ENCODE measurements at regions of chr22 and their contacts with region 1.

Region 1: GRCh38 chr22:49936018-49936952 is 17.9 kb downstream of the CRELD2 start:
- DNase-seq: peak; percentile 81 to 93 (median 88)
- ATAC-seq: peak; percentile 79 to 83
- H3K4me3 Mint-ChIP-seq: peak overlapping the region; percentile 55 to 87 (median 72)
- H3K27ac Mint-ChIP-seq: peak overlapping the region; percentile 72 to 94 (median 86)
- H3K4me1 Mint-ChIP-seq: peaks cover 0 to 27% (median 22%) of the 10 kb centered on the region in 4 donors
- H3K27me3 Mint-ChIP-seq: no peaks in the 10 kb centered on the region

Region 2: DNA sequence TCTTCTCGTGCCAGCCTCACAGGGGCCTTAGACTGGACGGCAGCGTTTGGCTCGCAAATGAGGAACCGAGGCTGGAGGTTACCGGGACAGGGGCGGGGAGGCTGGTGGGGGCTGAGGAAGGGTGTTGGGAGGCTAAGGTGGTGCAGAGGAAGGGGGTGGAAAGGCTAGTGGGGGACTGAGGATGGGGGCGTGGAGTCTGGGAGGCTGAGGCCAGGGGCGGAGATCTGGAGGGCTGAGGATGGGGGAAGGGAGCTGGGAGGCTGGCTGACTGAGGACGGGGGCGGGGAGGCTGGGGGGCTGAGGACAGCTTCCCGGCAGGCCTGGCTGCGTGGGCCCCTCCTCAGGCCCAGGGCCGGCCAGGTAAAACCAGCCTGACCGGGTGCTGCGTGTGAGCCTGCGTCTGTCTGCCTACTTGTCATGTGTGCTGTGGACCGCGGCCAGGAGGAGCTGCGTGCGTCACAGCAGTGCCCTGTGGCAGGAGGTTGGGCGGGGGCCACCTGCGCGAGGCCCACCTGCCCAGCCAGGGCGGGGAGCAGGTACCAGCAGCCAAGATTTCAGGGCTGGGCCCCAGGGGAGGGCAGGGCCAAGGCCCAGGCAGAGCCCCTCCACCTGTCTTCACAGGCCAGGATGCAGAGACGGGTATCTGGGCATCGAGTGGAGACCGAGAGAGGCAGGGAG is 14.9 kb after region 1 on chr22:
- POLR2A ChIA-PET with region 1: interaction called, 13 read pairs
- DNase-seq: no peak
- ATAC-seq: no peak
- H3K4me3 Mint-ChIP-seq: no peak overlapping the region
- H3K27ac Mint-ChIP-seq: no peak overlapping the region
- H3K4me1 Mint-ChIP-seq: peaks cover 0 to 8% (median 6%) of the 10 kb centered on the region in 4 donors
- H3K27me3 Mint-ChIP-seq: no peaks in the 10 kb centered on the region

Region 3: DNA sequence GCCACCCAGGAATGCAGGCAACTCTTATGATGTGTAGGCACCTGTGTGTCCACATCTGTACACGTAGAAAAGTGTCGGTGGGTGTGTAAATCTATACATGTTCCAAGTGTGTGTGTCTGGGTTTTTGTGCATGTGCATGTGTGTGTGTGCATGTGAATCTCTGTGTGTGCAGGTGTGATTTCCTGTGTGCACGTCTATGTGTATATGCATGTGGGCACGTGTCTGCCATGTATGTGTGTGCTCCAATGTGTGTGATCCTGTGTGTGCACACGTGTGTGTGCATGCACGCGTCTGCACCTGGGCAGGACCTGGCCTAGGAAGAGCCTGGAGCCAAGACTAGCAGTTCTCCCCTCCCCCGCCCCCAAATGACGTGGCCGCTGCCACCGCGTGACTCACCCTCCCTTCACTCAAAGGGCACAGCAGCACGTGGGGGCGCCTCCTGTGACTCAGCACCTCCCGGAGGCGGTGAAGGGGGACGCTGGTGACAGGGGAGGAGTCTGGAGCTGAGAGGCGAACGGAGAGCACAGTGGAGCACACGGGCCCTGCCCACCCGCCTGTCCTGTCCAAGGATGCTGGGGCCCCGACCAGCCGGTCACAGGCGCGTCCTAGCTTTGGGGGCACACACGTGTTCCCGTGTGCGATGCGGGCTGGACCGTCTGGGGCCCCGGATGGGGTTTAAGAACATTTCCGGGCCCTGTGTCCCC is 34.4 kb after region 1 on chr22:
- POLR2A ChIA-PET with region 1: interaction called, 22 read pairs
- DNase-seq: peak; percentile 79 to 96 (median 87)
- ATAC-seq: peak; percentile 89
- H3K4me3 Mint-ChIP-seq: peak overlapping the region; percentile 79 to 90 (median 86)
- H3K27ac Mint-ChIP-seq: peak overlapping the region; percentile 84 to 97 (median 95)
- H3K4me1 Mint-ChIP-seq: peaks cover 10 to 34% (median 32%) of the 10 kb centered on the region in 4 donors
- H3K27me3 Mint-ChIP-seq: peaks cover 0 to 1% (median 0%) of the 10 kb centered on the region in 5 donors